Endothelial cell of umbilical vein (primary cell): ENCODE measurements at regions of chr7 and their contacts with region 1.

Region 1: GRCh38 chr7:101287032-101287431 is 34.6 kb downstream of the IFT22 start:
- DNase-seq: no peak
- H3K4me3 ChIP-seq: no peak overlapping the region
- H3K27ac ChIP-seq: no peak overlapping the region
- H3K4me1 ChIP-seq: no peaks in the 10 kb centered on the region
- H3K27me3 ChIP-seq: peaks cover 7 to 9% of the 10 kb centered on the region in 2 experiments
- CTCF ChIP-seq: no peak
- POLR2A ChIP-seq: no peak

Region 2: DNA sequence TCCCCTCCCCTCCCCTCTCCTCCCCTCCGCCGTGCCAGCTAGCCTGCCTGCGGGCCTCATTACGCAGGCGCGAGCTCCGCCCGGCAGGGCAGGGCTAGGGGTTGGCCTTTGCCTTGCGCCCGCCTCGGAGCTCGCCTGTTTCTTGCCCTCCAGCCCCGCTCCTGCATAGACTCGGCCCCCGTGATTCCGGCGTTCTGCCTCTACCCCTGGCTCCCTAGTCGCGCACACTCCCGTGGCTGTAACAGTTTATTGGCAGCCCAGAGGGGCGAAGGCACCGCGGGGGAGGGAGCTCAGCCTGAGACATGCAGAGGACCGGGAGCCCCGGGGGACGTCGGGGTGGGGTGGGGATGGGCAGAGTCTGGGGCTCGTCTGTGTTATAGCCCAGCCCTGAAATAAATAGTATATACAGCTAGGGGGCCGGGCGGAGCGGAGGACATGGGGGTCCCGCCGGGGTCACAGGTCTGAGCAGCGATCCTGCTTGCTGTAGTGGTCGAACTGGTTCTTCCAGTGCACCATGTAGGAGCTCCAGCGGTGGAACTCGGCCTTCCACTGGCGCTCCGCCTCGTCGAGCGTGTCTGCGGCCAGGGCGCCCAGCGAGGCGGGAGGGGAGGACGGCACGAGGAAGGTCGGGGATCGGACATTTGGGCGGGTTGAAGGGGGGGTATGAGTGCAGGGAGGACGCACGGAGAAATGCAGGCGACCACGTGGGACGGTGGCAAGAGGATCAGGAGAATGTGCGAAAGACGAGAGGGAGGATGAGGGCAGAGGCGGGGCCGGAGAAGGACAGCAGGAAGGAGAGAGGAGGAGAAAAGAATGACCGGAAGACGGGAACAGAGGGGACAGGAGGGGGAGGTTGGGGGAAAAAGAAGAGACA is 397.0 kb before region 1 on chr7:
- CTCF ChIA-PET with region 1: interaction called, 10 read pairs
- POLR2A ChIA-PET with region 1: no interaction called
- dilution Hi-C with region 1: no loop called
- intact Hi-C with region 1: loop called (anchors 10 kb)
- DNase-seq: peak; percentile 88
- H3K4me3 ChIP-seq: peak overlapping the region; percentile 15 to 38 (median 37)
- H3K27ac ChIP-seq: no peak overlapping the region
- H3K4me1 ChIP-seq: peaks cover 40% of the 10 kb centered on the region
- H3K27me3 ChIP-seq: peaks cover 0 to 2% of the 10 kb centered on the region in 2 experiments
- CTCF ChIP-seq: no peak
- POLR2A ChIP-seq: no peak

Region 3: DNA sequence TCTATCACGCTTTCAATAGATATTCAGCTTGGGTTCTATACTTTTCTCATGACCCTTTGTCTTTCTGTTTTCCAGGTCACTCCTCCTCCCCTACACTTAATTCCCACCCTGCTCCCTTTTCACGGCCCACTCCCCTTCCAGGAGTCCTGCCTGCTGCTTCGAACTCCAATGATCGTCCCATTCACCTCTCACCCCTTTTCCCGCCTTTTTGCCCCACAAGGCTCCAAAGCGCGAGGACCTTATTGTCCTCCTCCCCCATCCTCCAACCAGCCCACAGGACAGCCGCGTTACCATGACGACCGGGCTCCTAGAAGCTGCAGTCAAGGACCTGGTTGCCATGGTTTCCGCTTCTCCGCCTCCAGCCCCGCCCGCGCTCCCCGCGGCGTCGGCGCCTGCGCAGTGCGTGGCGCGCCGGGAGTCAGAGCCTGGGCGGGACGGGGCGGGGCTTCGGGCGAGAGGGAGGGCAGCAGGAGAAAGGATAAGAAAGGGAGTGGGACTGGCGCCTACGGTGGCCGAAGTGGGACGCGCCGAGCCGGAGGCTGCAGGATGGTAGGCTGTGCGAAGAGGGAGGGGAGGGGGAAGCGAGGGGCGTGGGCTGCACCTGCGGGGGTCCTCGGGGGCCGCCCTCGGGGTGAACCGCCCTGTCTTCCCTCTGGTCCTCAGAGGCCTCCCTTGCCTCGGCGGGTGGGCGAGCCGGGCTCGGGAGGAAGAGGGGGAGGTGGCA is 132.9 kb before region 1 on chr7 and contains the start of gene AP1S1:
- CTCF ChIA-PET with region 1: interaction called, 12 read pairs
- POLR2A ChIA-PET with region 1: no interaction called
- dilution Hi-C with region 1: no loop called
- intact Hi-C with region 1: no loop called
- DNase-seq: peak; percentile 95
- H3K4me3 ChIP-seq: peak within 1 kb of the TSS; percentile 61 to 84 (median 63)
- H3K27ac ChIP-seq: no peak within 1 kb of the TSS
- H3K4me1 ChIP-seq: peaks cover 6% of the 10 kb centered on the region
- H3K27me3 ChIP-seq: peaks cover 0 to 4% of the 10 kb centered on the region in 2 experiments
- CTCF ChIP-seq: no peak
- POLR2A ChIP-seq: no peak
- total RNA-seq, gene AP1S1: 70.9 and 93.3 TPM in 2 replicates

Region 4: GRCh38 chr7:101217388-101218235 is 69.4 kb before region 1 on chr7 and contains the starts of genes PLOD3 and ZNHIT1:
- CTCF ChIA-PET with region 1: interaction called, 34 read pairs
- POLR2A ChIA-PET with region 1: no interaction called
- dilution Hi-C with region 1: no loop called
- intact Hi-C with region 1: no loop called
- DNase-seq: peak; percentile 98
- H3K4me3 ChIP-seq: peak within 1 kb of the TSS; percentile 75 to 84 (median 78)
- H3K27ac ChIP-seq: peak within 1 kb of the TSS; percentile 79
- H3K4me1 ChIP-seq: peaks cover 13% of the 10 kb centered on the region
- H3K27me3 ChIP-seq: no peaks in the 10 kb centered on the region
- CTCF ChIP-seq: peak in 1 of 2 donors; percentile 10
- POLR2A ChIP-seq: peak; percentile 87
- total RNA-seq, gene PLOD3: 161 and 170 TPM in 2 replicates
- total RNA-seq, gene ZNHIT1: 89.9 and 90.5 TPM in 2 replicates

Region 5: GRCh38 chr7:101244375-101245146 is 42.5 kb before region 1 on chr7 and contains the start of gene FIS1:
- CTCF ChIA-PET with region 1: interaction called, 18 read pairs
- POLR2A ChIA-PET with region 1: no interaction called
- dilution Hi-C with region 1: no loop called
- intact Hi-C with region 1: loop called (anchors 5 kb)
- DNase-seq: peak; percentile 93
- H3K4me3 ChIP-seq: peak within 1 kb of the TSS; percentile 64 to 89 (median 76)
- H3K27ac ChIP-seq: peak within 1 kb of the TSS; percentile 63
- H3K4me1 ChIP-seq: peaks cover 20% of the 10 kb centered on the region
- H3K27me3 ChIP-seq: no peaks in the 10 kb centered on the region
- CTCF ChIP-seq: peak; percentile 95 to 96
- POLR2A ChIP-seq: peak; percentile 96
- total RNA-seq, gene FIS1: 132 and 187 TPM in 2 replicates

Region 6: DNA sequence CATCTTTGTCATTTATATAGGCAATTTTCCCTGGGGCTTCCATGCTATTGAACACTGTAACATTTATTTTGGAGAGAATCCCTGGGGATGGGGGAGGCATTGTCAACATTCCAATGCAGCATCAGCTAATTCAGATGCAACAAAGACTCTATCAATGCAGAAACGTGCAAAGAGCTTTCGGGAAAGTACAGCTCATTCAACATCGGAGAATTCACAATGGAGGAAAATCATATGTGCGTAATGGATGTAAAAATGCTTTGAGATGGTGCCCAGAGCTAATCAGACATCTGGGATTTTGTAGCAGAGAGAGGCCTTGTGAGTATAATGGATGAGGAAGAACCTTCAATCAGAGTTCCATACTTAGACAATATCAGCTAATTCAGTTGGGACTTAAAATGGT is 13.8 kb before region 1 on chr7:
- CTCF ChIA-PET with region 1: interaction called, 21 read pairs
- POLR2A ChIA-PET with region 1: interaction called, 4 read pairs
- dilution Hi-C with region 1: no loop called
- intact Hi-C with region 1: no loop called
- DNase-seq: no peak
- H3K4me3 ChIP-seq: no peak overlapping the region
- H3K27ac ChIP-seq: no peak overlapping the region
- H3K4me1 ChIP-seq: no peaks in the 10 kb centered on the region
- H3K27me3 ChIP-seq: peaks cover 0 to 2% of the 10 kb centered on the region in 2 experiments
- CTCF ChIP-seq: no peak
- POLR2A ChIP-seq: no peak